ENCODE measurements at regions of chr9 and their contacts with region 1.

Region 1: GRCh38 chr9:98146101-98146991 is 27.3 kb upstream of the TRIM14 start:
- DNase-seq: peak; percentile 96 to 99
- H3K4me3 ChIP-seq: no peak overlapping the region; the same call in 1 of the 2 replicates
- H3K27ac ChIP-seq: peak overlapping the region; percentile 91
- H3K4me1 ChIP-seq: peaks cover 74% of the 10 kb centered on the region
- H3K27me3 ChIP-seq: no peaks in the 10 kb centered on the region
- CTCF ChIP-seq: no peak

Region 2: DNA sequence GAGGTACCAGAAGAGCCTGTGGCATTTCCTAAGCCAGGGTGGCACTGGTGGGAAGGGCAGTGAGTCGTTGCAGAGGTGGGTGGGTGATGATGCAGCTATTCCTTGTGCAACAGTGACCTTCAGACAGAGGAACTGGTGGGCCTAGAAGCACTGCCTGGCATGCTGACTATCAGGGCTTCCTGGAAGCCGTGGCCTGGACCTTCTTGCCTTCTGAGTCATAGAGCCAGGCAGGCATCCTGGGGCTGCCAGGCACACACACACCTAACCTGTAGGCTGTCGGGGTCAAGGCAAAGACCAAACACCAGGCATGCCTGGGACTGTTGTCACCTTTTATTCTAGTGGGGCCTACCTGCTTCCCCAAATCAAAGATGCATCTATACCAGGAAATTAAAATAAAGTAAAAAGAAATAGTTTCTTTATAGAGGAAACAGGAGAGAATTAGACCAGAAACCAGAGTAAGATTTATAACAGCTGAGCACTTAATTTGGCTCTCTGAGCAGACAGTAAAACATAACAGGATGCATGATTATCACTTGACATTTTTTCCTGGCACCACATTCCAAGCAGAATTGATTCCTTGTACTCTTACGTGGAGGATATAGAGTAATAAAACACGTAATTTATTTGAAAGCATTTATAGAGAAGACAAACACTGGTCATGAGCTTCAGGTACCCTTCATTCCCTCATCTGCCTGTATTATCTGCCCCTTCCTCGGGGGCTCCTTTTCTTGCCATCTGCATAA is 64.7 kb before region 1 on chr9:
- CTCF ChIA-PET with region 1: no interaction called
- POLR2A ChIA-PET with region 1: interaction called, 3 read pairs
- intact Hi-C with region 1: loop called (anchors 2 kb)
- DNase-seq: peak; percentile 79 to 94
- H3K4me3 ChIP-seq: no peak overlapping the region
- H3K27ac ChIP-seq: peak overlapping the region; percentile 72
- H3K4me1 ChIP-seq: peaks cover 29% of the 10 kb centered on the region
- H3K27me3 ChIP-seq: no peaks in the 10 kb centered on the region
- CTCF ChIP-seq: no peak

Region 3: DNA sequence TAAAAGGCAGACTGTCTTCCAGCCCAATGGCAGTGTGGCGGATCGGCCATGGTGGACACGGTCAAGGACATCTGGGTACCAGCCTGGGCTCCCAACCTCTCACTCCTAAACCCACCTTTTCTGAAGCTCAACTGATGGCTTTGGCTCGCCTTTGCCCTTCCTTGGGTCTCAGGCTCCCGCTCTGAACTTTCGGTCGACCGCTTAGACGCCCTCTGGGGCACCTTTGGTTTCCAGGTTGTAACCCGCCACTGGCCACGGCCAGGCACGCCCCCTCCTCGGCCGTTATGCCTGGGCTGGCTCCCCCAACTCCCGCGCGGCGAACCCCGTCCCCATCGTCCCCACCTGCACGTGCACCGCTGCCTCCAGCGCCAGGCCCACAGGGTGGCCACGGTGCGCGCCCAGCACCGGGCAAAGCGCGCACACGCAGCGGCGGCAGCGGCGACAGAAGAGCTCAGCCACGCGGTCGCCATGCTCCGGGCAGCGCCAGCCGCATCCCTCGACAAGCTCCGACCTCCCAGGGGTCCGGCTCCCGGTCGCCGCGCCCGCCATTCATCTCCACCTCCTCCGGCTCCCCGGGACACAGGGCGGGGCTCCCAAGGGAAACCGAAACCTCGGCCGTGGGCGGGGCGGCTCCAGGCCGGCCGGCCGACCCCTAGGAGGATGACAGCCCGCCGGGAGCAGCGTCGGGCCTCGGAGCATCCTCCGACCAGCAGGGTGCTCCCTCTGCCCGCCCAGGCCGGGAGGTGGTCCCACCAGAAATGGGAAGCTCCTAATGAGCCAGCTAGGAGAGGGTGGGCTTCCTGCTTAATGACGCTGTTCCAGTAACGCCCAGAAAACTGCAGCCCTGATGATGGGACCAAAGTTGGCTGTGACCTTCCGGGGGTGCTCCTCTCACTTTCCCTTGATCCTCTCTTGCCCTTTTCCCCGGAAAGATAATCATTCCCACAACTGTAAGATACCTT is 27.4 kb before region 1 on chr9 and contains the start of gene TRIM14:
- CTCF ChIA-PET with region 1: no interaction called
- POLR2A ChIA-PET with region 1: no interaction called
- intact Hi-C with region 1: loop called (anchors 2 kb)
- DNase-seq: peak in 1 of 2 experiments; percentile 69
- H3K4me3 ChIP-seq: peak within 1 kb of the TSS; percentile 80
- H3K27ac ChIP-seq: no peak within 1 kb of the TSS
- H3K4me1 ChIP-seq: peaks cover 29% of the 10 kb centered on the region
- H3K27me3 ChIP-seq: no peaks in the 10 kb centered on the region
- CTCF ChIP-seq: peak; percentile 45; the same call in 1 of the 2 replicates
- total RNA-seq, gene TRIM14: 18.1 and 20.2 TPM in 2 replicates

Region 4: DNA sequence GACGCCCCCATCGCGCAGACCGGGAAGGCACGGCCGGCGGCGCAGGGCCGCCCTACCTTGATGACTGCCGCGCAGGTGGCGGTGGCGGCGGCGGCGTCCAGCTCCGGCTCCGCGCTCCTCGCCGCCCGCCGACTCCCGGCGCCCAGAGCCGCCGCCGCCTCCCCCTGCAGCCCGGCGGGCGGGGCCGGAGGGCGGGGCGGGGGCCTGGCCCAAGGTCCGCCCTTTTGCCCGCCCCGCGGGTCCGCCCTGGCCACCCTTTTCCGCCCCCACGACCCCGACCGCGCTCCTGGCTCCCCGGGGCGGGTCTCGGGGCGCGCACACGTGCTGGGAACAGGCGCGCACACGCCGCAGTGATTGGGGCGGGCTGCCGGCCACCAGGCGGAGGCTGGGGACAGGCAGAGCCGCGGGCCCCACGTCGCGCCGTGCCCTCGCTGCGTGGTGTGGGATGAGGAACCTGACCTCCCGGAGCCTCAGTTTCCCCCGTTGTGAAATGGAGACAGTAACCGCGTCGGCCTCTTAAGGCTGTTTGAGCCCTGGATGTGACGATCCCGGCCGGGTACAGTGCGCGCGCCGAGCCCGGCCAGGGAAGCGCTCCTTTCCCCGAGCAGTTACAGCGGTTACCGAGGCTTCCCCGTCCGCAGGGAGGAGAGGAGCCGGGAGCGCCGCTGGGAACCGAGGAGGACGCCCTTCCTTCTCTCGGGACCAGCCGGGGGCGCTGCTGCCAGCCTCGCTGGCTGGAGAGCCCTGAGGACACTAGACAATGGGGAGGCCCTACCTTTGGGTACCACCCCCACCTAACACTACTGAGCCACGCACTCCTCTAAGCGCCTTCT is 46.4 kb after region 1 on chr9 and contains the start of gene CORO2A:
- CTCF ChIA-PET with region 1: interaction called, 4 read pairs
- POLR2A ChIA-PET with region 1: interaction called, 4 read pairs
- intact Hi-C with region 1: loop called (anchors 1 kb)
- DNase-seq: peak; percentile 74 to 93
- H3K4me3 ChIP-seq: peak within 1 kb of the TSS; percentile 63
- H3K27ac ChIP-seq: peak within 1 kb of the TSS; percentile 46
- H3K4me1 ChIP-seq: peaks cover 16% of the 10 kb centered on the region
- H3K27me3 ChIP-seq: no peaks in the 10 kb centered on the region
- CTCF ChIP-seq: peak; percentile 62; the same call in 1 of the 2 replicates
- total RNA-seq, gene CORO2A: 19.5 and 19.8 TPM in 2 replicates

Region 5: GRCh38 chr9:98207606-98208005 is 61.3 kb after region 1 on chr9:
- CTCF ChIA-PET with region 1: interaction called, 12 read pairs
- POLR2A ChIA-PET with region 1: no interaction called
- intact Hi-C with region 1: no loop called
- DNase-seq: no peak
- H3K4me3 ChIP-seq: no peak overlapping the region
- H3K27ac ChIP-seq: no peak overlapping the region
- H3K4me1 ChIP-seq: no peaks in the 10 kb centered on the region; the same call in 1 of the 2 replicates
- H3K27me3 ChIP-seq: no peaks in the 10 kb centered on the region
- CTCF ChIP-seq: no peak

Region 6: DNA sequence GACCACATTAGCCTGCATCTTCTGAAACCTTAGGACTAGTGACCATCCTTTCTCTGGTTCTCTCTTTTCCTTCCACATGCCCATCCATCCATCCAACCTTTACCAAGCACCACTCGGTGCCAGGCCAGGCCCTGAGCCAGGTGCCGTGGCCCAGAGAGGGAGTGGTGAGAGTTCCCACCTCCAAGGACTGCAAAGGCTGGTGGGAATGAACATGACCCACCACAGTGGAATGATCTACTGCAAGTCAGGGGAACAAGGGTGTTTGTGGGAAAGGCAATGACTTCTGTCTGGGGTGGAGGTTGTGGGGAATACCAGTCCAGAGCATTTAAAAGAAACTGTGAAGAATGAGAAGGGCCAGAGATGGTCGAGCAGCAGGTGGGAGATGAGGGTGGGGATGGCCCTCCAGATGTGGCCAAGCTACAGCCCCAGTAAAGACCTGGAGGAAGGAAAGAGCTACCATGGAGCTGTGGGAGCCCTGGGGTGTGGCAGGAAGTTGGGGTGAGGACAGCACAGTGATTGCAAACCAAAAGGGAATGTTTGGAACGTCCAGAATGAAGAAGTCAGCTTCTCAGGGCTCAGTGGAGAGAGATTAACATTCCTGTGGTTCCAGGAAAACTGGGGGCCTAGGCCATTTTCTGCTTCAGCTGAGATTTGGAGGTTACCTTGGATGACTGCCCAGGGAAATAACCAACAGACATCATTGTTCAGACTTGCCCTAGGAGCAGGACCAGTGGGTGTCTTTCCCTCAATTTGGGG is 76.7 kb after region 1 on chr9:
- CTCF ChIA-PET with region 1: no interaction called
- POLR2A ChIA-PET with region 1: no interaction called
- intact Hi-C with region 1: loop called (anchors 1 kb)
- DNase-seq: peak; percentile 92 to 98
- H3K4me3 ChIP-seq: no peak overlapping the region
- H3K27ac ChIP-seq: peak overlapping the region; percentile 93
- H3K4me1 ChIP-seq: peaks cover 98% of the 10 kb centered on the region
- H3K27me3 ChIP-seq: no peaks in the 10 kb centered on the region
- CTCF ChIP-seq: no peak

Region 7: DNA sequence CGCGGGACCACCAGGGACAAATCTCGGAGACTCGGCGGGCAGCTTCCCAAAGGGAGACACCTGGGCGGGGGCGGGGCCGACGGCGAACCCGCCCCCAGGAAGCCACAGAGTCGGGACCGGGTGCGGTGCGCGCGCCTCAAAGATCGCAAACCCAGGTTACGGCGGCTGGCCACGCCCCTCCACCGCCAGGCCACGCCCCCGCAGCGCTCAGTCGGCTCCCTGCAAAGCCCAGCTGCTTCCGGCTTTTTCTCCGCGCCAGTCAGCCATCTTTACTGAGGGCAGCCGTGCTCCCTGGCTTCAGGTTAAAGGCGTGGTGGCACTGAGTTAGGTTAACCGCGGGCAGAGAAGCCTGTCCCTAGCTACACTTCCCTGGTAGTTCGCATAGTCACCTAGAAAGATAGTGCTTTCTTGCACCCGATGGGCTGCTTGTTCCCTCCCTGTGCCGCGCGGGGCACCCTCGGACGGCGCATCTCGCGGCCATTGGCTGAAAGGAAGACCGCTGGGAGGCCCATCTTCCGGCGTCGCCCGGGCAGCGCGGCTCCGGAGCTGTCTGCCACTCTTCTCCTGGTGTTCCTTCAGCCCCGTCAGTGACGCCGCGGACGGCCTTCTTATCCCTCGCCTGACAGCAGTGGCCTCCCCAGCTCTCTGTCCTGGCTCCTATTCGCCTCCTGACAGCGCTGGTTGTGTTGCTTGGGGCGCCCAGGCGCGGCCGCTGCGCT is 109.4 kb after region 1 on chr9 and contains the start of gene TBC1D2:
- CTCF ChIA-PET with region 1: no interaction called
- POLR2A ChIA-PET with region 1: no interaction called
- intact Hi-C with region 1: loop called (anchors 2 kb)
- DNase-seq: peak; percentile 85 to 99
- H3K4me3 ChIP-seq: peak within 1 kb of the TSS; percentile 76
- H3K27ac ChIP-seq: peak within 1 kb of the TSS; percentile 82
- H3K4me1 ChIP-seq: peaks cover 49% of the 10 kb centered on the region
- H3K27me3 ChIP-seq: no peaks in the 10 kb centered on the region
- CTCF ChIP-seq: 0 out of 2 replicates have a peak, but pooled peaks have one; percentile 21
- total RNA-seq, gene TBC1D2: 42.9 and 44.7 TPM in 2 replicates

Measured in PC-9 (cell line).